ENCODE measurements at regions of chr5 and their contacts with region 1.

Region 1: DNA sequence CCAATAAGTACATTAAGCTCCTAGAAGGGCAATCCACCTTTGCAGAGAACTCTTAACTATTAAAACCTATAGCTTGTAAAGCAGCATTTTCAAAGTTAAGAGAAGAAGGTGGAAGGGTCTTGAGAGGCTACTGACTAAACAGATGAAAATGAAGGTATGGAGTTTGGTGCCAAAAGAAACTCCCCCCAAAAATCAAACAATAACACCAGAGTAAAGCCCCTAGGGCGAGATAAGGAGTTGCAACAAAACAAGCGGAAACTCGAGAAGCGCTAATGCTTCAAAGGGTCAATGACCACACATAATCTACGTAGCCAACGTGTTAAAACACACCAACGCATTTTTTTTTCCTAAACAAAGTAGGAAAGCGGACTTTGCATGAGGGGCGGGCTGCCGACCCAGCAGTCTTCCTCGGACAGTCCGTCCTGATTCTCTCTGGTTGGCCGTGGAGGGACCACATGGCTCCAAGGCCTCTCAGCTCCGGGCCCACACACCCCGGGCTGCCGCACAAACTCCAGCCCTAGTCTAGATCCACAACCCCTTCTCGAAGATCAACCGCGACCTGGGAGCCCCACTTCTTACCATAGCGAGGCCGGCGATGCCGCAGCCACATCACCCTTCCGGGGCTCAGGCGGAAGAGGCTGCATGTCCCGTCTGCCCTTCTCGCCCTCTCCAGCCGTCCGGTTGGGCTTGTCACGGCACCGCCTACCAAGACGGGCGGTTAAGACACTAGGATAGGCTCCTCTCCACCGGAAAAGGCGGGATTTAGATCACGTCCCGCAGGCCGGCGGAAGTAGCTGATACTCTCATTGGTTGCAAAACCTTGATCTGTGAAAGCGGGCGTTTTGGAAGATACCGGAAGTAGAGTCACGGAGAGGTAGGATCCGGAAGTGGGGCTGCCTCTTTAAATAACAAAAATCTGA is at the starts of genes TMEM167A and XRCC4:
- DNase-seq: peak; percentile 99
- H3K27ac ChIP-seq: peak within 1 kb of the TSS; percentile 77
- CTCF ChIP-seq: no peak

Region 2: GRCh38 chr5:82346399-82347165 is 730.4 kb before region 1 on chr5:
- CTCF ChIA-PET with region 1: no interaction called
- POLR2A ChIA-PET with region 1: interaction called, 11 read pairs
- DNase-seq: no peak
- H3K27ac ChIP-seq: no peak overlapping the region
- CTCF ChIP-seq: no peak

Region 3: GRCh38 chr5:83092619-83093018 is 15.6 kb after region 1 on chr5:
- CTCF ChIA-PET with region 1: no interaction called
- POLR2A ChIA-PET with region 1: no interaction called
- DNase-seq: no peak
- H3K27ac ChIP-seq: no peak overlapping the region
- CTCF ChIP-seq: no peak

Region 4: DNA sequence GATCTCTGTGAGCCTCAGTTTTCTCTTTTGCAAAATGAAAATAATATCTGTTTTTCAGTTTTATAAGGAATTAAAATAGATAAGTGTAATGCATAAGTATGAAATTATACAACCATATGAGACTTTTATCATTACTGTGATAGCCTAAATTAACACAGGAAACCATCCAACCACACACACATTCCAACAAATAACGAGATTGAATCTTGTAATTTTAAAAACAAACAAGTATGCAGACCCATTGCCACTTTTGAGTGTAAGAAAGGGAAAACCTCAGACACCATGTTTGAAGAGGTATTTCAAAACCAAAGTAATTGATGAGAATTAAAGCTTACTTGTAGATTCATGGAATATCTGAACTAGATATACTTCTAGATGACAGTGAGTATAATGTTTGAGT is 32.4 kb after region 1 on chr5:
- CTCF ChIA-PET with region 1: interaction called, 12 read pairs
- POLR2A ChIA-PET with region 1: no interaction called
- DNase-seq: no peak
- H3K27ac ChIP-seq: no peak overlapping the region
- CTCF ChIP-seq: no peak

Measured in RWPE1 (cell line).